Endothelial cell of umbilical vein (primary cell): ENCODE measurements at regions of chr7 and their contacts with region 1.

Region 1: GRCh38 chr7:151519765-151520418 is at the start of gene RHEB:
- DNase-seq: peak; percentile 99
- H3K4me3 ChIP-seq: peak within 1 kb of the TSS; percentile 75 to 96 (median 94)
- H3K27ac ChIP-seq: peak within 1 kb of the TSS; percentile 86
- H3K4me1 ChIP-seq: peaks cover 15% of the 10 kb centered on the region
- H3K27me3 ChIP-seq: peaks cover 0 to 2% of the 10 kb centered on the region in 2 experiments
- CTCF ChIP-seq: no peak
- POLR2A ChIP-seq: no peak
- total RNA-seq, gene RHEB: 108 and 109 TPM in 2 replicates

Region 2: GRCh38 chr7:151448261-151449252 is 71.3 kb before region 1 on chr7:
- CTCF ChIA-PET with region 1: interaction called, 5 read pairs
- POLR2A ChIA-PET with region 1: no interaction called
- dilution Hi-C with region 1: no loop called
- intact Hi-C with region 1: loop called (anchors 2 kb)
- DNase-seq: peak; percentile 72
- H3K4me3 ChIP-seq: peak overlapping the region; percentile 12 to 53 (median 18)
- H3K27ac ChIP-seq: no peak overlapping the region
- H3K4me1 ChIP-seq: no peaks in the 10 kb centered on the region
- H3K27me3 ChIP-seq: peaks cover 0 to 7% of the 10 kb centered on the region in 2 experiments
- CTCF ChIP-seq: peak; percentile 70 to 80
- POLR2A ChIP-seq: no peak

Region 3: GRCh38 chr7:151484971-151485707 is 34.8 kb before region 1 on chr7:
- CTCF ChIA-PET with region 1: interaction called, 3 read pairs
- POLR2A ChIA-PET with region 1: interaction called, 3 read pairs
- dilution Hi-C with region 1: no loop called
- intact Hi-C with region 1: loop called (anchors 1 kb)
- DNase-seq: peak; percentile 81
- H3K4me3 ChIP-seq: no peak overlapping the region
- H3K27ac ChIP-seq: peak overlapping the region; percentile 45
- H3K4me1 ChIP-seq: peaks cover 21% of the 10 kb centered on the region
- H3K27me3 ChIP-seq: no peaks in the 10 kb centered on the region
- CTCF ChIP-seq: no peak
- POLR2A ChIP-seq: no peak

Region 4: DNA sequence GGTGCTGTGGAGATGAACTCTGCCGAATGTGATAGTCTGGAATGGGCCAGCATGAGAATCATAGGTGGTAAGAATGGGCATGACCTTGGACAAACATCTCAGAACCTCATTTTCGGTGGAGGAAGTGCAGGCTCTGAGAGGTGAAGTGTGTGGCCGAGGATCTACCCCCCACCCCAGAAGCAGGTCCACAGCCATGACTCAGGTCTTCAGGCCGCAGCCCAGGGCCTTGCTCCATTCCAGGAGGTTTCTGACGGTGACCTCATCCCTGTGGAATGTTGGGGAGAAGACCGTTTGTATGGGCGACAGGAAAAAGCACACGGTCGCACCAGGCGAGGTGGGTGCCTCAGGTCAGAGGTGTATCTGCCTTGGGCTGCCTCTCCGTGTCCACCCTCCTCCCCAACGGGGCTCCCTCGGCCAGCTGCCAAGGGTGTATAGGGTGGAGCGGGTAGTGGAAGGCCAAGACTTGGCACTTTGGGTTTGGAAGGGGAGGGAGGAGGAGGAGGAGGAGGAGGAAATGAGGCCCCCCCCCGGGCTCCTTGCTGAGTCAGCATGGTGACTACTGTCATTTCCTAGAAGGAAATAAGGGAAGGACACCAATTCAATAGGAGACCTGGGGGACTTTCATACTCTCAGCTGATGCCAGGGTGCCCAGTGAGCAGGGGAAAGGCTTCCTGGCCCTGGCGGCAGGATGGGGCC is 167.8 kb after region 1 on chr7:
- CTCF ChIA-PET with region 1: no interaction called
- POLR2A ChIA-PET with region 1: no interaction called
- dilution Hi-C with region 1: no loop called
- intact Hi-C with region 1: loop called (anchors 1 kb)
- DNase-seq: peak; percentile 86
- H3K4me3 ChIP-seq: no peak overlapping the region
- H3K27ac ChIP-seq: peak overlapping the region; percentile 70
- H3K4me1 ChIP-seq: peaks cover 24% of the 10 kb centered on the region
- H3K27me3 ChIP-seq: no peaks in the 10 kb centered on the region
- CTCF ChIP-seq: no peak
- POLR2A ChIP-seq: peak; percentile 46

Region 5: GRCh38 chr7:151754142-151754590 is 234.3 kb after region 1 on chr7:
- CTCF ChIA-PET with region 1: no interaction called
- POLR2A ChIA-PET with region 1: no interaction called
- dilution Hi-C with region 1: no loop called
- intact Hi-C with region 1: loop called (anchors 1 kb)
- DNase-seq: peak; percentile 97
- H3K4me3 ChIP-seq: no peak overlapping the region
- H3K27ac ChIP-seq: peak overlapping the region; percentile 83
- H3K4me1 ChIP-seq: peaks cover 18% of the 10 kb centered on the region
- H3K27me3 ChIP-seq: no peaks in the 10 kb centered on the region
- CTCF ChIP-seq: peak; percentile 97 to 99
- POLR2A ChIP-seq: peak; percentile 66

Region 6: GRCh38 chr7:151871921-151872320 is 352.0 kb after region 1 on chr7:
- CTCF ChIA-PET with region 1: no interaction called
- POLR2A ChIA-PET with region 1: no interaction called
- dilution Hi-C with region 1: no loop called
- intact Hi-C with region 1: no loop called
- DNase-seq: no peak
- H3K4me3 ChIP-seq: no peak overlapping the region
- H3K27ac ChIP-seq: no peak overlapping the region
- H3K4me1 ChIP-seq: peaks cover 6% of the 10 kb centered on the region
- H3K27me3 ChIP-seq: peaks cover 4 to 9% of the 10 kb centered on the region in 2 experiments
- CTCF ChIP-seq: no peak
- POLR2A ChIP-seq: no peak